PC-9 (cell line): ENCODE measurements at regions of chr2 and their contacts with region 1.

Region 1: DNA sequence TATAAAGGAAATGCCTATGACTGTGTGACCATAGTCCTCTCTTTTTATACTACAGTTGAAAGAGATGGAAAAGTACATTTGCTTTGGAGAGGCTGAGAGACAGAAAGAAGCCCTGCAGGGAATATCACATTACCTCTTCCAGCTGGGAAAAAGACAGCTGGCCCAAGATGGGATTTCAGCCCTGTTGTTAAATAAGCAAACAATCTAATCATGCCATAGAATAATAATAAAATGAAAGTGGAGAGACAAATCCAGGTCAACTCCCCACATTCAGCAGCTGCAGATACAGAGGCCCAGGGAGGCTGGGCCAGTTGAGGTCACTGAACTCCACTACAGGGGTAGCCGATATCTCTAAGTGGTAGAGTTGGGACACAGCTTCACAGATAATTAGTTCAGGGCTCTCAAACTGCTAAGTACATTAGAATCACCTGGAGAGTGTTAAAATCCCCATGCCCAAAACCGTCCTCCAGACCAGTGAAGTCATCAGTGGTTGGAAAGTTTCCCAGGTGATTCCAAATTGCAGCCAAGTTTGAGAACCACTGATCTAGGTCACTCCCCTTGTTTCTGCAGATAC is 81.9 kb downstream of the MOGAT1 start:
- DNase-seq: no peak
- H3K4me3 ChIP-seq: no peak overlapping the region
- H3K27ac ChIP-seq: no peak overlapping the region
- H3K4me1 ChIP-seq: peaks cover 28% of the 10 kb centered on the region
- H3K27me3 ChIP-seq: no peaks in the 10 kb centered on the region
- CTCF ChIP-seq: no peak

Region 2: GRCh38 chr2:222767151-222767876 is 14.0 kb after region 1 on chr2:
- CTCF ChIA-PET with region 1: interaction called, 12 read pairs
- POLR2A ChIA-PET with region 1: no interaction called
- intact Hi-C with region 1: no loop called
- DNase-seq: peak in 1 of 2 experiments; percentile 80
- H3K4me3 ChIP-seq: no peak overlapping the region
- H3K27ac ChIP-seq: no peak overlapping the region
- H3K4me1 ChIP-seq: peaks cover 12% of the 10 kb centered on the region
- H3K27me3 ChIP-seq: no peaks in the 10 kb centered on the region
- CTCF ChIP-seq: no peak